AG04449 (cell line): ENCODE measurements at regions of chr11 and their contacts with region 1.

Region 1: DNA sequence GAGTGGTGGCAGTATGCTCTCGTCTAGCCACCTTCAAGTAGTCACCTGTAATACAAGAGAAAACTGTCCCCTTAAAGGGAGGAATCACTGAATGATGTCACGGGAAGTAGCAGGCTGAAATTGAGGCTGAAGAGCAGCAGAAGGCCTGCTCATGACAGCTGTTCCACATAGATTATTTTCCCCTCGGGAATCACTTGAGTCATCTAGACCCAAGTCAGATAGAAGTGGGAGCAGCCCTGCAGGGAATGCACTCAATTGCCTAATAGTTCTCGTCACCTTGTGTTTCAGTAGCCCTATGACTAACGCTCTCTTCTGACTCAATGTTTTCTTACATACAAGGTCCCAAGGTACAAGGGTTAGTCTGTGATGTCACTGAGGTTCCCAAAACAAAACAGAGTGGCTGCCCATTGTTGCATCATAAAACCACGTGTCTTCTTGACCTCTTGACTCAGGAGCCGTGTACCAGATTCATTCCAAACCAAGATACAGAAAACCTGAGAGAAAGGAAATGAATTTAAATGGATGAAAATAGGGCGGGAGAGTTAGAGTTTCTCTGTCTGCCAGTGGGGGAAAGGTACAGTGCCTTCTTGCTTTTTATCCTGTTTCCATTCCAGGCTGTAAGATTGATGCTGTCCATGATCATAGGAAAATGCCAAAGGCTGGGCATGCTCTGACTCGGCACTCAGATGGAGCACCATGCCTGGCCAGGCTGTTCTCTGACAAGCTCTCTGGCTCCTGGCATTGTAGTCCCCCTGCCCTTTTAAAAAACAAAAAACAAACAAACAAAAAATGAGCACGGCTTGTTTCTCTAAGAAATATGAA is 21.6 kb upstream of the C11orf96 start:
- DNase-seq: peak; percentile 100
- H3K4me3 ChIP-seq: no peak overlapping the region
- CTCF ChIP-seq: no peak

Region 2: DNA sequence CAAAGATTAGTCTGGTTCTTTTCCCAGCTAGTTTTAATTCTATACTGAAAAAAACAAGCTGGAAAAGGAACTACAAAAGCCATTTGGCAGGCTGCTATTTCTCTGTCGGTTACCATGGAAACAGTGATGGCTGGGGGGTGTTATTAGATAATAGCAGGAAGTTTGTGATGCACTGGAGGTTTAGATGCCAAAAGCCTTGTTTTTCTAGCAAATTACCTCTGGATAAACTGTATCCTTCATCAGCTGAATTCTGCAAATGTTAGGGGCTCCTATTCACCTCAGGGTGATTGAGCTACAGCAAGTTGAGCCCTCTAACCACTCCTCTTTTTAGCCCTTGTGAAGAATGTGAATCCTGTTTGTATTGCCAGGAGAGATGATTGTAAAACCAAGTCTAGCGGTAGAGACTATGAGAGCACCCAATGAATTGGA is 15.0 kb before region 1 on chr11:
- CTCF ChIA-PET with region 1: interaction called, 12 read pairs
- POLR2A ChIA-PET with region 1: no interaction called
- DNase-seq: no peak
- H3K4me3 ChIP-seq: no peak overlapping the region
- CTCF ChIP-seq: no peak

Region 3: DNA sequence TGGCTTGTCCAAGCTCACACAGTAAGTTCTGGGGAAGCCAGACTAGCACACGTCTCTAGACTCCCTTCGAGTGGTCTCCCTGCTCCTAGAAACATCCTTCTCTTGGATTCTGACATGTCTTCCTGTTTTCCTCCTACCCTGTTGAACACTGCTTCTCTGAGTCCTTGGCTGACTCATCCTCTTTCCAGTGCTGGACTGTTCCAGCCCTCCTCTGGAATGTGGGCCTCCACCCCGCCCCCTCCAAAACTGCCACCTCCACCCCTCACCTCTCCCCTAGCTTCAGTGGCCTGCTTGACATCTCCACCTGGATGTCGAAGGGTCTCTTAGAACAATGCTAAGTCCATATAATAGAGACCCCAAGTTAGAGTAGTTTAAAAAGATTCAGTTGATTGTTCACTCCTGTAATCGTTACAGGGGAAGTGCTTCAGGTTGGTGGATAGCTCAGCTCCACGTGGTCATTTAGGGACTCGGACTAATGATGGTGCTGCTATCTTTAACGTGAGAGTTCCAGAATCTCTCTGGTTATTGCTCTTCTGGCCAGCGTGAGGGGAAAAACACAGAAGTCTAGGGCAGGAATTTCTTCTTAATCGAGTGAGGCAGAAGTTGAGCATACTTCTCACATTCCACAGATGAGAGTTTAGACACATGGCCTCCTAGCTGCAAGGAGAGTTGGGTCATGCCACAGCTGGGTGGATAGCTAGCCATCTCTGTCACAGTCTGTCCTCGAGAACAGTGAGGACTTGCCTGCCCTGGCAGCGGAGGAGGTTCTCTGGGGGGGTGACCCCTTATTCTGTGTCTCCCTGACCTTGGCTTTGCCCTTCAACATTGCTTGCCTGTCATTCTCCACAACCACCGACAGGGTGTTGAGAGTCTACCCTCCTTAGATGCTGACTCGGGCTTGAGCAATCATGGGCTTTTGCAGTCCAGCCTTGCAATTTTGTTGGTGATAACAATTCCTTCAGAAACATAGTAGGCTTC is 16.9 kb after region 1 on chr11:
- CTCF ChIA-PET with region 1: interaction called, 14 read pairs
- POLR2A ChIA-PET with region 1: interaction called, 22 read pairs
- DNase-seq: peak; percentile 59
- H3K4me3 ChIP-seq: no peak overlapping the region
- CTCF ChIP-seq: no peak

Region 4: GRCh38 chr11:43955381-43956118 is 34.7 kb after region 1 on chr11:
- CTCF ChIA-PET with region 1: no interaction called
- POLR2A ChIA-PET with region 1: no interaction called
- DNase-seq: no peak
- H3K4me3 ChIP-seq: no peak overlapping the region
- CTCF ChIP-seq: no peak